ENCODE measurements at regions of chr11 and their contacts with region 1.

Region 1: GRCh38 chr11:73177778-73178577 is 35.9 kb upstream of the FCHSD2 start:
- DNase-seq: peak; percentile 88
- ATAC-seq: peak; percentile 99
- H3K4me3 ChIP-seq: peak overlapping the region in 1 of 5 experiments; percentile 16
- H3K4me3 Mint-ChIP-seq: peak overlapping the region; percentile 37
- H3K27ac ChIP-seq: peak overlapping the region; percentile 17 to 19
- H3K27ac Mint-ChIP-seq: peak overlapping the region; percentile 81
- H3K4me1 ChIP-seq: peaks cover 32 to 40% of the 10 kb centered on the region in 2 donors
- H3K4me1 Mint-ChIP-seq: peaks cover 38% of the 10 kb centered on the region
- H3K27me3 ChIP-seq: no peaks in the 10 kb centered on the region
- H3K27me3 Mint-ChIP-seq: no peaks in the 10 kb centered on the region
- CTCF ChIP-seq: peak; percentile 93

Region 2: GRCh38 chr11:72722050-72722748 is 455.8 kb before region 1 on chr11:
- CTCF ChIA-PET with region 1: interaction called, 24 read pairs
- POLR2A ChIA-PET with region 1: no interaction called
- intact Hi-C with region 1: no loop called
- DNase-seq: peak; percentile 93
- ATAC-seq: peak; percentile 85
- H3K4me3 ChIP-seq: peak overlapping the region; percentile 36 to 74 (median 50)
- H3K4me3 Mint-ChIP-seq: peak overlapping the region; percentile 95
- H3K27ac ChIP-seq: peak overlapping the region; percentile 65 to 81
- H3K27ac Mint-ChIP-seq: peak overlapping the region; percentile 94
- H3K4me1 ChIP-seq: peaks cover 55 to 77% of the 10 kb centered on the region in 2 donors
- H3K4me1 Mint-ChIP-seq: peaks cover 76% of the 10 kb centered on the region
- H3K27me3 ChIP-seq: no peaks in the 10 kb centered on the region
- H3K27me3 Mint-ChIP-seq: no peaks in the 10 kb centered on the region
- CTCF ChIP-seq: no peak

Region 3: GRCh38 chr11:72848846-72849466 is 329.0 kb before region 1 on chr11:
- CTCF ChIA-PET with region 1: interaction called, 12 read pairs
- POLR2A ChIA-PET with region 1: no interaction called
- intact Hi-C with region 1: no loop called
- DNase-seq: peak; percentile 56
- ATAC-seq: no peak
- H3K4me3 ChIP-seq: no peak overlapping the region
- H3K4me3 Mint-ChIP-seq: no peak overlapping the region
- H3K27ac ChIP-seq: peak overlapping the region in 1 of 2 donors; percentile 13
- H3K27ac Mint-ChIP-seq: peak overlapping the region; percentile 75
- H3K4me1 ChIP-seq: no peaks in the 10 kb centered on the region
- H3K4me1 Mint-ChIP-seq: peaks cover 6% of the 10 kb centered on the region
- H3K27me3 ChIP-seq: no peaks in the 10 kb centered on the region
- H3K27me3 Mint-ChIP-seq: no peaks in the 10 kb centered on the region
- CTCF ChIP-seq: peak; percentile 71

Region 4: GRCh38 chr11:72935700-72936099 is 242.3 kb before region 1 on chr11:
- CTCF ChIA-PET with region 1: interaction called, 13 read pairs
- POLR2A ChIA-PET with region 1: no interaction called
- intact Hi-C with region 1: no loop called
- DNase-seq: no peak
- ATAC-seq: no peak
- H3K4me3 ChIP-seq: no peak overlapping the region
- H3K4me3 Mint-ChIP-seq: peak overlapping the region; percentile 33
- H3K27ac ChIP-seq: peak overlapping the region in 1 of 2 donors; percentile 70
- H3K27ac Mint-ChIP-seq: peak overlapping the region; percentile 85
- H3K4me1 ChIP-seq: peaks cover 17 to 24% of the 10 kb centered on the region in 2 donors
- H3K4me1 Mint-ChIP-seq: peaks cover 50% of the 10 kb centered on the region
- H3K27me3 ChIP-seq: no peaks in the 10 kb centered on the region
- H3K27me3 Mint-ChIP-seq: no peaks in the 10 kb centered on the region
- CTCF ChIP-seq: no peak

Region 5: GRCh38 chr11:73126804-73127480 is 51.0 kb before region 1 on chr11:
- CTCF ChIA-PET with region 1: interaction called, 16 read pairs
- POLR2A ChIA-PET with region 1: no interaction called
- intact Hi-C with region 1: loop called (anchors 10 kb)
- DNase-seq: no peak
- ATAC-seq: no peak
- H3K4me3 ChIP-seq: no peak overlapping the region
- H3K4me3 Mint-ChIP-seq: no peak overlapping the region
- H3K27ac ChIP-seq: peak overlapping the region in 1 of 2 donors; percentile 61
- H3K27ac Mint-ChIP-seq: peak overlapping the region; percentile 59
- H3K4me1 ChIP-seq: peaks cover 9 to 27% of the 10 kb centered on the region in 2 donors
- H3K4me1 Mint-ChIP-seq: peaks cover 41% of the 10 kb centered on the region
- H3K27me3 ChIP-seq: no peaks in the 10 kb centered on the region
- H3K27me3 Mint-ChIP-seq: no peaks in the 10 kb centered on the region
- CTCF ChIP-seq: no peak

Region 6: DNA sequence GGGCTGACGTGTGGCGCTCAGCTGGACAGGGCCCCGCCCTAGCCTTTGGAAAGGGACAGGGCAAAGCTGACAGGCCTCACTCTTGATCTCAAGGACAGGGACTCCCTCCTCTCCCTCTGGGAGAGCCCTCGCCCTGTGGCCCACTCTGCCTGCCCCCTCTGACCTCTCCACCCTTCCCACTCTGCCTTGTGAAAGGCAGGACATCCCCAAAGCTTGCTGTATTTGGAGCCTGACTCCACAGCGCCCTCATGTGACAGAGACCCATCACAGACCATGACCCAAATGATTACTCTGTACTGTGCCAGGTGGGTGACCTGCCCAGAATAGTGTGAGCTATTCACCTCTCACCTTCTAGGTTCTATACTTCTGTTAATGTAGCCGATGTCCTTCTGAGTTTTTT is 58.9 kb after region 1 on chr11:
- CTCF ChIA-PET with region 1: interaction called, 281 read pairs
- POLR2A ChIA-PET with region 1: no interaction called
- intact Hi-C with region 1: no loop called
- DNase-seq: peak; percentile 50
- ATAC-seq: peak; percentile 54
- H3K4me3 ChIP-seq: no peak overlapping the region
- H3K4me3 Mint-ChIP-seq: no peak overlapping the region
- H3K27ac ChIP-seq: no peak overlapping the region
- H3K27ac Mint-ChIP-seq: no peak overlapping the region
- H3K4me1 ChIP-seq: no peaks in the 10 kb centered on the region
- H3K4me1 Mint-ChIP-seq: no peaks in the 10 kb centered on the region
- H3K27me3 ChIP-seq: no peaks in the 10 kb centered on the region
- H3K27me3 Mint-ChIP-seq: no peaks in the 10 kb centered on the region
- CTCF ChIP-seq: peak; percentile 51